ENCODE measurements at regions of chr10 and their contacts with region 1.

Region 1: GRCh38 chr10:80472234-80473095 is 18.4 kb downstream of the TSPAN14 start:
- DNase-seq: no peak
- H3K4me3 Mint-ChIP-seq: peak overlapping the region; percentile 15
- H3K27ac Mint-ChIP-seq: peak overlapping the region; percentile 83
- H3K4me1 Mint-ChIP-seq: peaks cover 86% of the 10 kb centered on the region
- H3K27me3 Mint-ChIP-seq: no peaks in the 10 kb centered on the region

Region 2: DNA sequence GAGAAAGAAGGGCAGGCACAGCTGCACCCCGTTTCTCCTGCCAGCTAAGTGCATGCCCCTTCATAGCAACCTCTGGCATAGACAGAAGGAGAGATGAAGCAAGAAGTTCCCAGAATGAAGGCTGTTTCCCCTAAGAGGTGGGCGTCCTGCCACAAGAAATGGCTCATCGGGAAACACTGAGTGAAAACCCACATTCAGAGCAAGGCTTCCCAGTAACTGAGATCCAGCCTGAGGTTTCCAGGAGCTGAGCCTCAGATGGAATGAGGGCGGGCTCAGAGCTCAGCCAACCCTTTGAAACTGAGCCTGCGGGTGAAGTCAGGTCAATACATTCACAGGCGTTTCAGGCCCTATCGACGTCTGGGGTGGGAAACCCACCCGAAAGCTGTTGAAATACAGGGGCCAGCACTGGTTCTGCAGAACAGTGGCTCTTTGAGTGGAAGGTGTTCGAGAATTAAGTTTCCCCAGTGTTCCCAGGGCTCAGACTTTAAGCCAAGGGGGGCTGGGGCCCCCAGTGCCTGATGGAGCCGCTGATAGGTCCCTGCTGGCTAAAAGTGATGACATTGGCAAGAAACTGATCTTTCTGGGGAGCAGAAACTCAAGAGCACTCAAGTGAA is 1928.6 kb before region 1 on chr10:
- CTCF ChIA-PET with region 1: no interaction called
- POLR2A ChIA-PET with region 1: no interaction called
- DNase-seq: no peak
- H3K4me3 Mint-ChIP-seq: no peak overlapping the region
- H3K27ac Mint-ChIP-seq: no peak overlapping the region
- H3K4me1 Mint-ChIP-seq: peaks cover 13% of the 10 kb centered on the region
- H3K27me3 Mint-ChIP-seq: no peaks in the 10 kb centered on the region

Region 3: DNA sequence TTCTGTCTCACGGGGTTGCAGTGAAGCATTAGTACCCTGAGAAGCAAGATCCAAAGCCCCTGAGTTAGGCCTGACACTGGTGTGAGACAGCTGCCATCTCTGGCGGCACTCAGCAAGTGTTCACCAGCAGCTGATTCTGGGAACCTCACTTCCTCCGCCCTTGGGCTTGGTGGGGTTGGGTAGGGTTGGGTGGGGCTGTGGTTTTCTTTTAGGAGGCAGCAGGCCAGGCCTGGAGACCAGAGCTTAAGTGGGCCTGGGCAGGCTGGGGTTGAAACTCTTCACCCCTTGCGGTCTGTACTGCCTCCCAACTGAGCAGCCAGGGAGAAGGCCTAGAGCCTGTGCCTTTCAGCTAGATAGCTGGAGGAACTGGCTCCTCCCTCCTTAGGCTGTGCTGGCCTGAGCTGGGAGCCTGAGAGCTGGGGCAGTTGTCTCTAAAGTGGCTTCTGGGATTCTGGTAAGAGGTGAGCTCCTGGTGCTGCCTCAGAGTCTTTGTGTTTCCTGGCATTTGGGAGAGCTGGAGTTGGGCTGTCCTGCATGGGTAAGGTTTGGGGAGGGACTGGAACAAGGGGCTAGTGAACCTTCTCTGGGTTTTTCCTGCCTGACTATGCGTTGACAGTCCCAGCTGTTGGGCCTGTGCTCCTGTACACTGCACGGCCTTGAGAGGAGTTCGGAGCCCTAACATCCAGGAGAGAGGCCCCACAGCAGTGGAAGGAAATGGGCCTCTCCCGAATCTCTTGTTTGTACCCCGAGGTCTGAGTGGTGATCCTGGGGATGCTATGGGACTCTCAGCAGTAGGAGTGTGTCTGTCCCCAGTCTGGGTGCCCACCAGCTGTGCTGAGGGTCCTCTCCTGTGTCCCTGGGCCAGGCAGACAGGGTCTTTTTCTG is 13.2 kb before region 1 on chr10:
- CTCF ChIA-PET with region 1: interaction called, 37 read pairs
- POLR2A ChIA-PET with region 1: interaction called, 3 read pairs
- DNase-seq: peak; percentile 84
- H3K4me3 Mint-ChIP-seq: peak overlapping the region; percentile 98
- H3K27ac Mint-ChIP-seq: peak overlapping the region; percentile 86
- H3K4me1 Mint-ChIP-seq: peaks cover 80% of the 10 kb centered on the region
- H3K27me3 Mint-ChIP-seq: no peaks in the 10 kb centered on the region

Region 4: DNA sequence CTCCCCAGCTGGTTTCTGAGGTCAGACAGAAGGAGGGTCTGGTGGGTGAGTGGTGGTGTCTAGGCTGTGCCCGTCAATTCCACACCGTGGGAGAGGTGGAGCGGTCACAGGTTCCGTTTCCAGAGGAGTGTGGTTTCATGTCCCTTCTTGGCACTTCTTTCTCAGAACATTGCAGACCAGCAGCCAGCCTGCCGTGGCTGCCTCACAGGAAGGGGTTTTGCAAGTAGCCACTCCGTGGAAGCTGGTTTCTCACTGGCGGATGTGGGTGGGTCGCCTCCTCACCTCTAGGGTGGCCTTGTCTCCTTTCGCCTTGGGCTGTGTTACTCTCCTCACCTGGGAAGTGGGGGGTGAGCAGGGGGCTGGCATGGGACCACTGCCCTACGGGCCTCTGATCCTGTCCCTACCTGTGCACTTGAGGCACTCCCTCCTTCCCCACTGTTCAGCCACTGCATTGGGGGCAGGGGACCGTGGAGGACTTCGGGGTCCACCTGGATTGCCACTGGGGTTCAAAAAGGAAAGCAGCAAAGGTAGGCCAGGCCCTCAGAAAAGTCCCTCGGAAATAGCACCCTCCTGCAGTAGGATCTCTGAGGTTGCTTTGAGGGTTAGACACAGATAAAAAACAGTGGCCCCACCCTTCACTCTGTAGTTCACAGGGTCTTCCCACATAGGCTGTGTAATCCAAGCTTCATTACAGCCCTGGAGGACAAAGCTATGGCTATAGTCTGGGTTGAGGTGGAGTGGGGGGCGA is 15.5 kb after region 1 on chr10:
- CTCF ChIA-PET with region 1: interaction called, 17 read pairs
- POLR2A ChIA-PET with region 1: no interaction called
- DNase-seq: peak; percentile 78
- H3K4me3 Mint-ChIP-seq: peak overlapping the region; percentile 64
- H3K27ac Mint-ChIP-seq: peak overlapping the region; percentile 89
- H3K4me1 Mint-ChIP-seq: peaks cover 99% of the 10 kb centered on the region
- H3K27me3 Mint-ChIP-seq: no peaks in the 10 kb centered on the region

Region 5: GRCh38 chr10:80535671-80536365 is 63.4 kb after region 1 on chr10:
- CTCF ChIA-PET with region 1: no interaction called
- POLR2A ChIA-PET with region 1: no interaction called
- DNase-seq: peak; percentile 65
- H3K4me3 Mint-ChIP-seq: peak overlapping the region; percentile 78
- H3K27ac Mint-ChIP-seq: peak overlapping the region; percentile 94
- H3K4me1 Mint-ChIP-seq: peaks cover 37% of the 10 kb centered on the region
- H3K27me3 Mint-ChIP-seq: no peaks in the 10 kb centered on the region

Region 6: DNA sequence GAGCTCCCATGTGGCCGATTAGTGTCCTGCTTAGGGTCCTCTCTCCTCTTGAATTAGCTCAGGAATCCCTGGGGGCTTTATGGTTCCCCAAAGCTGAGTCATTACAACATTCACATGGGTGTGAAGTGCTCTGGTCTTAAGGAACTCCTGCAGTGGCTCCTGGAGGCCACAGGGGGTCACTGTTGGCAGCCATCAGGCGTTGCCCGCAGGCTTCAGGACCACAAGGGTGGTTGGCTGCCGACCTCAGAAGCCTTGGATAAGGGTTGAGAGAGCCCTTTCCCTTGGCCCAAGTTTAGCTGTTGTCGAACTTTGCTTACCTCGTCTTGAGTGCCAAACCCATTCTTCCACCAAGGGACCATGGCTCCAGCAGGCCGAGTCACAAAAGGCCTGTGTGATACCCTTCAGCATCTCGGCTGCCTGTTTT is 127.0 kb after region 1 on chr10:
- CTCF ChIA-PET with region 1: no interaction called
- POLR2A ChIA-PET with region 1: no interaction called
- DNase-seq: peak; percentile 37
- H3K4me3 Mint-ChIP-seq: no peak overlapping the region
- H3K27ac Mint-ChIP-seq: no peak overlapping the region
- H3K4me1 Mint-ChIP-seq: no peaks in the 10 kb centered on the region
- H3K27me3 Mint-ChIP-seq: no peaks in the 10 kb centered on the region

Measured in activated CD4-positive, alpha-beta T cell treated with anti-CD3 and anti-CD28 coated beads, Interleukin-2, amount 10 ng/mL, durations not matched to agents 7 days and 5 days (primary cell).